CD4-positive, alpha-beta memory T cell (primary cell): ENCODE measurements at regions of chr4 and their contacts with region 1.

Region 1: DNA sequence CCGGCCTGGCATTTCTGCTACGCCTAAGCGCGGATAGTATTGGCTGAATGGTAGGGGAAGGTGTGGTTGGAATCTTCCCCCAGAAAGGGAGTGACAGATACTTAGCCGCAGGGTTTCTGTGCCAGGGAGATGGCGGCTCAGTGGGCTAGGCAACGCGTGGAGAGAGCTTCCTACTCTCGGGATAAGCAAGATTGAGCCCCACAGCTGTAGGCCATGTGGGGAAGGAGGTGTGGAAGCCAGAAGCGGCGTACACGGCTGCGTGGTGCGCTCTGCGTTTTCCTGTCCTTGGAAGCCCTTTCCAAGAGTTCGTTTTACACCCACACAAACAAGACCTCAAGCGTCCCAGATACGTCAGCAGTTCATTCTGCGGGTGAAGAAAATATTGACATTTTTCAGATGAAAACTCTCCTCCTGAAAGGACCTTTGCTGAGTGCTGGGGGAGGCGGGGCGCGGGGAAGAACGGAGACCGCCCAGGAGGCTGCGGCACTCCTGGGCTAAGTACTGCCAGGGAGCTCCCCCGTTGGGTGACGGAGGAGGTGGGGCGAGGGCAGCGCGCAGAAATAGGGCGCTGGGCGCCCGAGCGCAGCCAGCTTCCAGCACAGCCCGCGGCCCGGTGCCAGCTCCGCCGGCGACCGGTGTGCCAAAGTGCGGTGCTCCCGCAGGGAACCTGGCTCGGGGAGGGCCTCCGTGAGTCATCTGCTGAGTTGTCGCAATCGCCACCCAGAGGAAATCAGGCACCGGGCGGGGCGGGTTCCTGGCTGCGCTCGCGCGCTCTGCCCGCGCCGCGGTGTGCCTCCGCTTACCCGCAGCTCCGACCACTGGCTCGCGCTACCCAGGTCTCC is at the start of gene GPAT3:
- DNase-seq: peak; percentile 58 to 73 (median 67)
- H3K4me3 ChIP-seq: peak within 1 kb of the TSS; percentile 75
- H3K4me3 Mint-ChIP-seq: peak within 1 kb of the TSS; percentile 90 to 99 (median 94)
- H3K27ac ChIP-seq: peak within 1 kb of the TSS; percentile 29
- H3K27ac Mint-ChIP-seq: peak within 1 kb of the TSS; percentile 79 to 95 (median 89)
- H3K4me1 ChIP-seq: peaks cover 21% of the 10 kb centered on the region
- H3K4me1 Mint-ChIP-seq: peaks cover 21 to 38% (median 28%) of the 10 kb centered on the region in 4 donors
- H3K27me3 ChIP-seq: no peaks in the 10 kb centered on the region
- H3K27me3 Mint-ChIP-seq: peaks cover 3 to 7% of the 10 kb centered on the region in 2 donors
- total RNA-seq, gene GPAT3: 7.8 to 8.8 TPM

Region 2: DNA sequence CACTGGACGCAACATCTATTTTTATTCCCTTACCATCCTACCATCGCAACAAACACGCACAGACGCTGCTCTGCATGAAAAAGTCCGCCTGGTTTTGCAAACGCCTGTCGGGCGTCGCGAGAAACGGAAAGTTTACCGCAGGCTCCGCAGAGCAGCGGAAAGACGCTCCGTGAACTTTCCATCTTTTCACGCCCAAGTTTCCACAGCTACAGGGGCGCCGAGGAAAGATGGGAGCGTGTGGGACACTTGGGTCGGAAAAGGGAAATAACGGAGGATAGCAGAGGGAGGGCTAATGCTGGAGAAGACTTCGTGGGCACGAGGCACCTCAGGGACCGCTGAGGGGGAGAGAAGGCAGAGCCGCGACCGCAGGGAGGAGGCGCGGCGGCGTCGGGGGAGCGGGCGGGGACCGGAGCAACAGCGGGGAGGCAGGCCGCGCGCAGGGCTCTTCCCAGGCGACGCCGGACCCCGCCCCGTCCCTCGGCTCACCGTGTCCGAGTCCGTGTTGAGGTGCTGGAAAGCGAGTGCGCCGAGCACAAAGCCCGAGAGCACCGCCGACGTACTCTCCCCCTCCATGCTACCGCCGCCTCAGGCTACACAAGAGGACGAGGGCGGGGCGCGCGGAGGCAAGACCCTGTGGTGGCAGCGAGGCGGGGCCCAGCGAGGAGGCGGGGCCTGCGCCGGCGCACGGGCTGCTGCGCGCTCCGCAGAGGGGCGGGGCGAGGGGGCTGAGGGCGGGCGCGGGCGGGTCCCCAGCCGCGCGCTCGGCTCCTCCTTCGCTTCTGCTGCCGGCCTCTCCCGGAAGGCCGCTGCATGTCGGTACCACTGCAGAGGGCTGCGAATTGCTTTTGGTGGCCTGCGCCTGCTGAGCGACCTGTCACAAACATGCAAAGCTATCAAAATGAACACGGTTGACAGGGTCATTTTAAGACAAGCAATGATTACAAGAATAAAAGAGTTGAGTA is 51.0 kb before region 1 on chr4 and contains the start of gene ABRAXAS1:
- CTCF ChIA-PET with region 1: interaction called, 3 read pairs
- POLR2A ChIA-PET with region 1: interaction called, 34 read pairs
- intact Hi-C with region 1: loop called (anchors 1 kb)
- DNase-seq: peak; percentile 93 to 96 (median 95)
- H3K4me3 ChIP-seq: peak within 1 kb of the TSS; percentile 67 to 79
- H3K4me3 Mint-ChIP-seq: peak within 1 kb of the TSS; percentile 91 to 100 (median 96)
- H3K27ac ChIP-seq: peak within 1 kb of the TSS; percentile 68
- H3K27ac Mint-ChIP-seq: peak within 1 kb of the TSS; percentile 95 to 98 (median 97)
- H3K4me1 ChIP-seq: peaks cover 23% of the 10 kb centered on the region
- H3K4me1 Mint-ChIP-seq: peaks cover 18 to 36% (median 27%) of the 10 kb centered on the region in 4 donors
- H3K27me3 ChIP-seq: no peaks in the 10 kb centered on the region
- H3K27me3 Mint-ChIP-seq: peaks cover 0 to 2% of the 10 kb centered on the region in 2 donors
- total RNA-seq, gene ABRAXAS1: 35.9 to 36.7 TPM

Region 3: GRCh38 chr4:83503974-83504373 is 31.8 kb before region 1 on chr4:
- CTCF ChIA-PET with region 1: interaction called, 5 read pairs
- POLR2A ChIA-PET with region 1: interaction called, 3 read pairs
- intact Hi-C with region 1: loop called (anchors 1 kb)
- DNase-seq: peak in 4 of 5 donors; percentile 24 to 48 (median 34)
- H3K4me3 ChIP-seq: no peak overlapping the region
- H3K4me3 Mint-ChIP-seq: peak overlapping the region in 5 of 8 donors; percentile 0 to 74 (median 54)
- H3K27ac ChIP-seq: no peak overlapping the region
- H3K27ac Mint-ChIP-seq: peak overlapping the region; percentile 49 to 94 (median 87)
- H3K4me1 ChIP-seq: peaks cover 18% of the 10 kb centered on the region
- H3K4me1 Mint-ChIP-seq: peaks cover 11 to 21% (median 16%) of the 10 kb centered on the region in 4 donors
- H3K27me3 ChIP-seq: no peaks in the 10 kb centered on the region
- H3K27me3 Mint-ChIP-seq: peaks cover 1 to 2% of the 10 kb centered on the region in 2 donors

Region 4: DNA sequence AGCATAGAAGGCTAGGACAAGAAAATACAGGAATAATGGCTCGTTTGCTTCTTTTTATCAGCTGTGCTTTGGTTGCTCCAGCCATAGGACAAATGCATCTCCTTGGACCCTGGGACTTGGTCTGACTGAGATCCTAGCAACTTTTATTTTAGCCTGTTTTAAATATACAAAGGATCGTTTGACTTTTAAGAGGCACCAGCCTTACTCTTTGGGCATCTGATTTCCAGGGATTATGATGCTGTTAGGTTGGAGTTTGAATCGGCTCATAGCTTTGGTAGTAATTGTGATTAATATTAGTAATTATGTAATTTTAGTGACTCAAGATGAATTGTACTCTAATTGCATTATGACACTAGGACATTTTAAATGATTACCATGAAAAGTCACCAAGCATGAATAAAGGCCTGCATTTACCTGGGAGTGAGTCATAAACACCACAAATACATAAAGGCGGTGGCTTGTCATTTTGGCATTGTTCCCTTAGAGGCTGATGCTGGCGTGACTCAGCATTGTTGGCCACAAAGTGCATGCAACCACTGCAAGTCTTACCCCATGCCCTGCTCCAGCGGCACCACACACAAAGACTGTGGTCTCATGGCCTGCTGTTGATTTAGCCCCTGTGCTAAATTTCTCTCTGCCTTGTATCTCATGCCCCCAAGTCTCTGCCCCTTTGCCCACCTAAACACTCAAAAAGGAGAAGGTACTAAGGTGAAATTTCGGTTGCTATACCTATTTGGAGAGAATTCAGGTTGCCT is 12.6 kb after region 1 on chr4:
- CTCF ChIA-PET with region 1: interaction called, 3 read pairs
- POLR2A ChIA-PET with region 1: interaction called, 4 read pairs
- intact Hi-C with region 1: loop called (anchors 1 kb)
- DNase-seq: peak; percentile 21 to 78 (median 40)
- H3K4me3 ChIP-seq: no peak overlapping the region
- H3K4me3 Mint-ChIP-seq: no peak overlapping the region
- H3K27ac ChIP-seq: no peak overlapping the region
- H3K27ac Mint-ChIP-seq: peak overlapping the region in 2 of 7 donors; percentile 28 to 70
- H3K4me1 ChIP-seq: peaks cover 8% of the 10 kb centered on the region
- H3K4me1 Mint-ChIP-seq: peaks cover 0 to 14% (median 3%) of the 10 kb centered on the region in 4 donors
- H3K27me3 ChIP-seq: no peaks in the 10 kb centered on the region
- H3K27me3 Mint-ChIP-seq: no peaks in the 10 kb centered on the region

Region 5: DNA sequence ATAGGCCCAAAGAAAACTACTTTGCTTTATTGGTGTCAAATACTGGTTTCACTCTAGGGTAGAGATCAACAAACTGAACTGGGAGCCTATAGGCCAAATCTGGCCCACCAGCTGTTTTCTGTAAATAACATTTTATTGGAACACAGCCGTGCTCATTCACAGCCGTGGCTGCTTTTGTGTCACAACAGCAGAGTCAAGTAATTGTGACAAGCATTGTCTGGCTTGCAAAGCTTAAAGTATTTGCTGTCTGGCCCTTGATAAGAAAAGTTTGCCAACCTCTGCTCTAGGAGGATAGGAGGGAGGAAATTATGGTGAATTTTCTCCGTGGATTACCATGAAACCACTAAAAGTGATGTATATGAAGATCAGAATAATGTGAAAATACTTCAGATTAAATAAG is 53.5 kb after region 1 on chr4:
- CTCF ChIA-PET with region 1: no interaction called
- POLR2A ChIA-PET with region 1: no interaction called
- intact Hi-C with region 1: loop called (anchors 5 kb)
- DNase-seq: no peak
- H3K4me3 ChIP-seq: no peak overlapping the region
- H3K4me3 Mint-ChIP-seq: no peak overlapping the region
- H3K27ac ChIP-seq: no peak overlapping the region
- H3K27ac Mint-ChIP-seq: no peak overlapping the region
- H3K4me1 ChIP-seq: no peaks in the 10 kb centered on the region
- H3K4me1 Mint-ChIP-seq: no peaks in the 10 kb centered on the region
- H3K27me3 ChIP-seq: no peaks in the 10 kb centered on the region
- H3K27me3 Mint-ChIP-seq: no peaks in the 10 kb centered on the region